Left colon (tissue), 2 donors: ENCODE measurements at regions of chr4 and their contacts with region 1.

Region 1: DNA sequence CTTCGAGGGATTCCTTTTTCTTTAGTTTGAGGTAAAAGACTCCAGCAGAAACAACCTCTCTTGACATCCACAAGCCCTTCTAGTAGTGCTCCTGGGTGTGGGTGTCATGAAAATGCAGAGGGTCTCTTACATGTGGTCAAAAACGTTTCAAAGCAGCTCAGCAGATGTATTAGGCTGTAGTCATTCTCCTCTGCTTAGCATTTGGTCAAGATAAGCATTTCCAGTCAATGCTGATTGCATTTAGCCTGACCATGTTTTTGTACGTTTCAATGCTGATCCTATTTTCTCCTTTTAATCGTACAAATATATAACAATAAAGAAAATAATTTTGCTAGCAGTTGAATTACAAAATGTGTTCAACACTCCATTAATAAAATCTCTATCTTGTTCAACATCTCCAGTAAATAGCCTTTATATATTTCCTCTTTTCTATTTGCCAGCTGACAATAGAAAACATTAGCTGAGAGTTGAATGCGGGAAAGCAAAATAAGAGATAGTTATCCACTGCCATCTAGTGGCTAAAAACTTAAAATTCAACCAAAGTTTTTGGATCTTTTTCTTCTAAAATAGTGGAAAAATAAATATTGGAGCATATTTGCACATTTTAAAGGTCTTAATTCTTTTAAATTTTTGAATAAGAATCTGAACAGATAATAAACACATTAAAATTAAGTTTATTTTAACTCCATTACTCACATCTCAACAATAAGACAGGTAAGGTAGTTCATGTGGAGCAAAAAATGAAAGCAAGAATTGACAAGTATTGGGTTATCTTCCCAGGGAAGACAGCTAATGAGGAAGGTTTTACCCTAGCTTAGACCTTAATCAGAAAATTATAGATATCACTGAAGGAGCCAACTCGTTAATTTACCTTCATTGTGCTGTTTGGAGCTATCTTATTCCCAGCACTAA is 15.2 kb upstream of the PACRGL start:
- DNase-seq: no peak
- ATAC-seq: no peak

Region 2: GRCh38 chr4:20422398-20422797 is 262.7 kb before region 1 on chr4:
- intact Hi-C with region 1: loop called in 1 of 2 experiments (anchors 10 kb)
- DNase-seq: peak; percentile 35 to 45
- ATAC-seq: peak; percentile 90